Calu3 (cell line): ENCODE measurements at regions of chr11 and their contacts with region 1.

Region 1: GRCh38 chr11:6353367-6353987 is 33.2 kb upstream of the CAVIN3 start:
- DNase-seq: peak; percentile 78
- H3K4me3 Mint-ChIP-seq: no peak overlapping the region
- H3K27ac Mint-ChIP-seq: no peak overlapping the region
- H3K4me1 Mint-ChIP-seq: peaks cover 22% of the 10 kb centered on the region
- H3K27me3 Mint-ChIP-seq: no peaks in the 10 kb centered on the region
- CTCF ChIP-seq: peak; percentile 93

Region 2: GRCh38 chr11:5891216-5891800 is 462.2 kb before region 1 on chr11:
- CTCF ChIA-PET with region 1: no interaction called
- intact Hi-C with region 1: loop called (anchors 5 kb)
- DNase-seq: no peak
- H3K4me3 Mint-ChIP-seq: no peak overlapping the region
- H3K27ac Mint-ChIP-seq: no peak overlapping the region
- H3K4me1 Mint-ChIP-seq: no peaks in the 10 kb centered on the region
- H3K27me3 Mint-ChIP-seq: peaks cover 31% of the 10 kb centered on the region
- CTCF ChIP-seq: no peak

Region 3: GRCh38 chr11:6022956-6023355 is 330.5 kb before region 1 on chr11:
- CTCF ChIA-PET with region 1: interaction called, 4 read pairs
- intact Hi-C with region 1: loop called (anchors 1 kb)
- DNase-seq: peak; percentile 13
- H3K4me3 Mint-ChIP-seq: no peak overlapping the region
- H3K27ac Mint-ChIP-seq: no peak overlapping the region
- H3K4me1 Mint-ChIP-seq: no peaks in the 10 kb centered on the region
- H3K27me3 Mint-ChIP-seq: peaks cover 66% of the 10 kb centered on the region
- CTCF ChIP-seq: no peak

Region 4: DNA sequence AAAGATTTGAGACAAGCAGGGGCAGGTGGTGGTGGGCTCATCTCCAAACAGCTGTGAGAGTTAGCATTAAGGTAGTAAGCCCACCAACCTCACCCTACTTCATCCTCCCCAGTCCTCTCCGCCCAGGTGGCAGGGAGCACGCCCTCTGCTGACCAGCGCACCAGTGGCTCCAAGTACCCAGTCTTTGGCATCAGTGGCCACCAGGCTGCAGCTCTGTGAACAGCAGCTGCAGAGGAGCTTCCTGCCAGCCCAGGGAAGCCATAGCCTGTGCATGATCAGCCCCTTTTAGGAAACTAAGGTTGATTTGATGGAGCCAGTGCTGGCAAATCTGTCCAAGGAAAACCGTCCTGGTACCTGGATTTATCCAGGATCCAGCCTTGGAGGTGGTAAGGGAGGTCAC is 54.9 kb before region 1 on chr11:
- CTCF ChIA-PET with region 1: interaction called, 12 read pairs
- intact Hi-C with region 1: loop called (anchors 2 kb)
- DNase-seq: peak; percentile 75
- H3K4me3 Mint-ChIP-seq: no peak overlapping the region
- H3K27ac Mint-ChIP-seq: no peak overlapping the region
- H3K4me1 Mint-ChIP-seq: no peaks in the 10 kb centered on the region
- H3K27me3 Mint-ChIP-seq: no peaks in the 10 kb centered on the region
- CTCF ChIP-seq: peak; percentile 85

Region 5: DNA sequence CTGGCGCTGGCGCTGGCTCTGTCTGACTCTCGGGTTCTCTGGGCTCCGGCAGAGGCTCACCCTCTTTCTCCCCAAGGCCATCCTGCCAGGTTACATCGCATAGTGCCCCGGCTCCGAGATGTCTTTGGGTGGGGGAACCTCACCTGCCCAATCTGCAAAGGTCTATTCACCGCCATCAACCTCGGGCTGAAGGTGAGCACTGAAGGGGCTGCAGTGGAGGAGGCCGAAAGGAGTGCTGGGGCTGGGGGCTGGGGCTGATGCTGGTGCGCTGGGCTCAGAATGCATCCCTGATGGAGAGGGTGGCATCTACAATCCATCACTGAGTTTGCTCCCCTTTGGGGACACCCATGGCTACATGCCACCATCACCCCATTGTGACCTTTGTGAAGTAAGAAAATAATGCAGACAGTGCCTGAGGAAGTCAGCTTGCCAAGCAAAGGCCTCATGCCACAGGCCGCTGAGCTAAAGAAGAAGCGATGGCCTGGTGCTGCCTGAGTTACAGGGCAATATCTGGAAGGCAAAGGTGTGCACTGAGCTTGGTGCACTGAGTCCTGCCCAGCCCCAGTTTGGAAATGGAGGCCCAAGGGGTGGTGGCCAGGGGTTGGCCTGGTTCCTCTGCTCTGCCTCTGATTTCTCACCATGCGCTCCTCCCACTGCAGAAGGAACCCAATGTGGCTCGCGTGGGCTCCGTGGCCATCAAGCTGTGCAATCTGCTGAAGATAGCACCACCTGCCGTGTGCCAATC is 37.4 kb after region 1 on chr11:
- CTCF ChIA-PET with region 1: no interaction called
- intact Hi-C with region 1: no loop called
- DNase-seq: no peak
- H3K4me3 Mint-ChIP-seq: peak overlapping the region; percentile 89
- H3K27ac Mint-ChIP-seq: no peak overlapping the region
- H3K4me1 Mint-ChIP-seq: peaks cover 27% of the 10 kb centered on the region
- H3K27me3 Mint-ChIP-seq: no peaks in the 10 kb centered on the region
- CTCF ChIP-seq: no peak

Region 6: GRCh38 chr11:6404342-6405051 is 51.0 kb after region 1 on chr11:
- CTCF ChIA-PET with region 1: no interaction called
- intact Hi-C with region 1: no loop called
- DNase-seq: no peak
- H3K4me3 Mint-ChIP-seq: no peak overlapping the region
- H3K27ac Mint-ChIP-seq: no peak overlapping the region
- H3K4me1 Mint-ChIP-seq: no peaks in the 10 kb centered on the region
- H3K27me3 Mint-ChIP-seq: peaks cover 18% of the 10 kb centered on the region
- CTCF ChIP-seq: no peak